BJ (cell line): ENCODE measurements at regions of chr17 and their contacts with region 1.

Region 1: DNA sequence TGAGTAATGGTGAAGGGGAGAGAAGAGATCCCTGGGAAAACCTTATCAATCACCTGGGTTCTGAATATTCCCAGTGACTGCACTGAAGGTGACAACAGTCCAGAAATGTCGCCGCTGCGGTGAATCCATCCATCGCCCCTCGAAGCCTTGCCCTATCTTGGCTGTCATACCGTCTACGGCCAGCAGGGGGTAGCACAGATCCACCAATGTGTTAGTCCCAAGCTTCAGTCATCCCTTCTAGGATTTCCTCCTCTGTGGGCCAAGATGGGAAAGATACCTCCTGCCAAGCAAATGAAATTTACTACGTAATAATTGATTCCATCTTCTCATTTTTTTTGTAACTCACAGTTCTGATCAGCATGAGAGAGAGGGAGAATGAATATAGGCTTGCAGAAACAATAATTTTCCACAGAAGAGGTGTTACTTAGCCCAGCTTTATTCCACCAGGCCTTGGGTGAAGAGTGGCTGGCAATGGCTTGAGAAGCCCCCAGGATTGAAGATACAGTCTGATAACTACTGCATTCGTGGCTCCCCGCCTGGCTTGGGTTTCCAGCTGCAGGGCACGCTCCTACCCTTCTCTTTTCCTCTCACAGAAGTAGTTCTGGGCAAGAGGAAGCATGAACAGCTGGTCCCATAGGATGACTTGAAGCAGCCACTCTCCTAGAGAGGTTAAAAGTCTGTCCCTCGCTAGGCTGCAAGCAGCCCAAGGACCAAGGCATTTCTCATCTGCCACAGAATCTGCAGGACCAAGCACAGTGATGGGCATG is 2.6 kb upstream of the FMNL1 start:
- DNase-seq: no peak
- H3K4me3 ChIP-seq: no peak overlapping the region
- H3K27me3 ChIP-seq: peaks cover 5% of the 10 kb centered on the region; the same call in 1 of the 2 replicates
- CTCF ChIP-seq: peak; percentile 84

Region 2: DNA sequence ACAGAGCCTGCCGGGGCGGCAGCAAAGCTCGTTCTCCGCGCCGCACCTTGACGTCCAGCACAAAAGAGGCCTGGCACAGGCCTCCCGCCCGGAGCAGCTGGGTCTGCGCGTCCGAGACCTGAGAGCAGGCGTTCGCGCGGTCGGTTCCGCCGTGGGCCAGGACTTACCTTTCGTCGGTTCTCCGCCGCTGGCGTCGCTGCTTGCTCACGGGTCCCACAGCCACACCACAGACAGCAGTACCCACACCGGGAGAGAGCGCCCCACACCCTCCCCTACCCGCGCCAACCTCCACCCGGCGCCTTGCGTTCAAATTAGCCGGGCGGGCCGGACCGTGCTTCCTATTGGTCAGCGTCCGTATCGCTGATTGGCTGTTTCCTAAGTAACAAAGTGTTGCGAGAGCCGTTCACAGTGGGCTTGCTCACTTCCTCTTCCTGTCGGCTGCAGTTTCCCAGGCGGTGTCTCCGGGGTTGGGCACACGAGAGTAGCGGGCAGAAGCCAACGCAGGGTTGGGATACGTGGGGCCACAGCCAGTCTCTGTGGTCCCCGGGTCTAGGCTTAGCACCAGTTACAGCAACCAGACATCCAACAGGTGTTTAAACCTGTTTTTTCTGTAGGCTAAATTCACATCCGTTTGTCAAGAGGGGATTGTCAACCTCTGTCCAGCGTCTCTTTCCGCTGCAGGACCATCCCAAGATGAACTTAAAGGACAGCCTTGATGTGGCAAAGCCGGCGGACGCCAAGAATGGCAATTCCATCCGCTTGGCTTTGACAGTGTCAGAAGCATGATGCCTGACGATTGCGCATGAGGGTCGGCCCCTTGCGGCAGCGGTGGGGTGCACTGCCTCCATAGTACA is 271.4 kb before region 1 on chr17 and contains the start of gene KIF18B:
- CTCF ChIA-PET with region 1: no interaction called
- POLR2A ChIA-PET with region 1: no interaction called
- DNase-seq: peak; percentile 60
- H3K4me3 ChIP-seq: peak within 1 kb of the TSS; percentile 81
- H3K27me3 ChIP-seq: no peaks in the 10 kb centered on the region
- CTCF ChIP-seq: no peak
- polyA plus RNA-seq, gene KIF18B: 5.5 and 10.6 TPM in 2 replicates

Region 3: DNA sequence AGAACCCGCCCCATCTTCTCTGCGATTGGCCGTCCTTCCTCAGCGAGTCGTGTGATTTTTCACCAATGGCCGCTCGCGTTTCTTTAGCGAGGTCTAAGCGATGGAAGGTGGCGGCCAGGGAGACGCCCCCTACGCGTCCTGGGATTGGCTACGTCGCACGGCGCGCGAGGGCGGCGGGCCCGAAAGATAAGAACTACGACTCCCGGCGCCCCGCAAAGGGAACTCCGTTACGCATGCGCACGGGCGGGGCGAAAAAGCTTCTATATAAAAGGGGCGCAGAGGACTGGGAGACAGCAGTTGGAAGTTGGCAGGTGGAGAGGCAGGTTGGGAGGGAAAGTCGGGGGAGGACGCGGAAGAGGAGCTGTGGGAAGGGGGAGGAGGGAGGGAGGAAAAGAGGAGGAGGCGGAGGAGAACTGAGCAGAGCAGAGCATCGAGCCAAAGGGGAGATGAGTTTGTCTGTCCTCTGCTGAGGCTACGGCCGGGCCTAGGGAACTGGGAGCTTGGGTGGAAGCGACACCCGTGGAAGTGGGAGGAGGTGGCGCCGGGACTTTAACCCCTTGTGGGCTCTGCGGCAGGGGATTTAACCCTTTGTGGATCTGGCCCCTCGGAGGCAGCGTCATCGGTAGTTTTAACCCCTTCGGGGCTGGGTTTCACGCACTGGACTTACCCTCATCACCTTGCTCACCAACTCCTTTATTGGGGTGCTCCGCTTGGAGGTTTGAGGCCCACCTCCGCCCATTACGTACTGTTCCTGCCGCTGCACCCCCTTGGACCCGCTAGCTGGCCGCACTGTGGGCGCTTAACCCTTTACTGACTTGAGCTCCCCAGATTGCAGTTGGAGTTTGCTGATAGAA is 70.7 kb before region 1 on chr17 and contains the start of gene HEXIM1:
- CTCF ChIA-PET with region 1: interaction called, 17 read pairs
- POLR2A ChIA-PET with region 1: interaction called, 4 read pairs
- DNase-seq: peak; percentile 96
- H3K4me3 ChIP-seq: peak within 1 kb of the TSS; percentile 91
- H3K27me3 ChIP-seq: no peaks in the 10 kb centered on the region
- CTCF ChIP-seq: no peak
- polyA plus RNA-seq, gene HEXIM1: 16.0 and 16.7 TPM in 2 replicates

Region 4: GRCh38 chr17:45235416-45236281 is 16.6 kb after region 1 on chr17:
- CTCF ChIA-PET with region 1: interaction called, 78 read pairs
- POLR2A ChIA-PET with region 1: no interaction called
- DNase-seq: no peak
- H3K4me3 ChIP-seq: no peak overlapping the region
- H3K27me3 ChIP-seq: no peaks in the 10 kb centered on the region
- CTCF ChIP-seq: peak; percentile 86

Region 5: GRCh38 chr17:45265821-45266220 is 46.7 kb after region 1 on chr17:
- CTCF ChIA-PET with region 1: interaction called, 18 read pairs
- POLR2A ChIA-PET with region 1: no interaction called
- DNase-seq: no peak
- H3K4me3 ChIP-seq: no peak overlapping the region
- H3K27me3 ChIP-seq: no peaks in the 10 kb centered on the region
- CTCF ChIP-seq: no peak

Region 6: GRCh38 chr17:45277216-45277849 is 58.3 kb after region 1 on chr17:
- CTCF ChIA-PET with region 1: interaction called, 18 read pairs
- POLR2A ChIA-PET with region 1: no interaction called
- DNase-seq: no peak
- H3K4me3 ChIP-seq: no peak overlapping the region
- H3K27me3 ChIP-seq: no peaks in the 10 kb centered on the region
- CTCF ChIP-seq: peak; percentile 82

Region 7: GRCh38 chr17:45385331-45385997 is 166.4 kb after region 1 on chr17:
- CTCF ChIA-PET with region 1: interaction called, 85 read pairs
- POLR2A ChIA-PET with region 1: no interaction called
- DNase-seq: no peak
- H3K4me3 ChIP-seq: no peak overlapping the region
- H3K27me3 ChIP-seq: no peaks in the 10 kb centered on the region; the same call in 1 of the 2 replicates
- CTCF ChIP-seq: peak; percentile 100

Region 8: DNA sequence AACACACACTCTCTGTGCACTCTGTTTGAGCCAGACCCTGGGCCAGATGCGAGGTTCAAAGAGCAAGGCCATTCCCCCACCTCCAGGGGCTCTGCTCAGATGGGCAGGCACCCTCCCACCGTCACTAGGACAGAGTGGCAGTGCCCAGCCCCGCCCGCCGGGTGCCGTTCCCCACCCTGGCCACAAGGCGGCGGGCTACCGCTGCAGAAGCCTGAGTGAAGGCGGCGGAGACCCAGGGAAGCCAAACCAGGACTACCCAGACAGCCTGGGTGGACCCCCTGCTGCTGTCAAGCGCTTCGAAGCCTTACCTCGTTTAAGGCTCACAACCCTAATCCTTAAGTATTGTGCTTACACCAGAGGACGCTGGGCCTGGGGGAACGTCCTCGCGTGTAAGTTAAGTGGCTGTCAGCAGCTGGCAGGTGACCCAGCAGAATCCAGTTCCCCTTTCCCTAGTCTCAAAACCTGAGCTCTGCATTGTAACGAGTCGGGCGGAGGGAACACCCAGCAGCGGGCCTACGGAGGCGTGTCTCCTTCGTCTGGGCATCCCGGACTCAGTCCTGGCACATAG is 209.1 kb after region 1 on chr17:
- CTCF ChIA-PET with region 1: interaction called, 35 read pairs
- POLR2A ChIA-PET with region 1: no interaction called
- DNase-seq: no peak
- H3K4me3 ChIP-seq: no peak overlapping the region
- H3K27me3 ChIP-seq: peaks cover 14% of the 10 kb centered on the region
- CTCF ChIP-seq: peak; percentile 97